GM12878 (cell line): ENCODE measurements at regions of chr1 and their contacts with region 1.

Region 1: GRCh38 chr1:2300851-2301606 is 72.9 kb downstream of the SKI start:
- DNase-seq: peak; percentile 76
- ATAC-seq: peak; percentile 89
- H3K4me3 ChIP-seq: peak overlapping the region; percentile 71
- H3K27ac ChIP-seq: peak overlapping the region; percentile 91
- H3K4me1 ChIP-seq: peaks cover 28% of the 10 kb centered on the region
- H3K27me3 ChIP-seq: no peaks in the 10 kb centered on the region
- CTCF ChIP-seq: no peak
- EP300 ChIP-seq: peak; percentile 81 to 84; a peak in 3 of 4 replicates
- POLR2A ChIP-seq: peak; percentile 47; the same call in 1 of the 2 replicates
- RAD21 ChIP-seq: no peak

Region 2: GRCh38 chr1:2205191-2205952 is 95.7 kb before region 1 on chr1:
- CTCF ChIA-PET with region 1: no interaction called
- POLR2A ChIA-PET with region 1: no interaction called
- RAD21 ChIA-PET with region 1: no interaction called
- SMC1A ChIA-PET with region 1: no interaction called
- in situ Hi-C with region 1: no loop called
- intact Hi-C with region 1: no loop called
- DNase-seq: peak; percentile 33
- ATAC-seq: peak; percentile 90
- H3K4me3 ChIP-seq: peak overlapping the region; percentile 64; the same call in 1 of the 2 replicates
- H3K27ac ChIP-seq: no peak overlapping the region
- H3K4me1 ChIP-seq: peaks cover 4% of the 10 kb centered on the region
- H3K27me3 ChIP-seq: no peaks in the 10 kb centered on the region; a peak in 1 of 4 replicates
- CTCF ChIP-seq: no peak
- EP300 ChIP-seq: no peak
- POLR2A ChIP-seq: peak; percentile 51
- RAD21 ChIP-seq: no peak

Region 3: DNA sequence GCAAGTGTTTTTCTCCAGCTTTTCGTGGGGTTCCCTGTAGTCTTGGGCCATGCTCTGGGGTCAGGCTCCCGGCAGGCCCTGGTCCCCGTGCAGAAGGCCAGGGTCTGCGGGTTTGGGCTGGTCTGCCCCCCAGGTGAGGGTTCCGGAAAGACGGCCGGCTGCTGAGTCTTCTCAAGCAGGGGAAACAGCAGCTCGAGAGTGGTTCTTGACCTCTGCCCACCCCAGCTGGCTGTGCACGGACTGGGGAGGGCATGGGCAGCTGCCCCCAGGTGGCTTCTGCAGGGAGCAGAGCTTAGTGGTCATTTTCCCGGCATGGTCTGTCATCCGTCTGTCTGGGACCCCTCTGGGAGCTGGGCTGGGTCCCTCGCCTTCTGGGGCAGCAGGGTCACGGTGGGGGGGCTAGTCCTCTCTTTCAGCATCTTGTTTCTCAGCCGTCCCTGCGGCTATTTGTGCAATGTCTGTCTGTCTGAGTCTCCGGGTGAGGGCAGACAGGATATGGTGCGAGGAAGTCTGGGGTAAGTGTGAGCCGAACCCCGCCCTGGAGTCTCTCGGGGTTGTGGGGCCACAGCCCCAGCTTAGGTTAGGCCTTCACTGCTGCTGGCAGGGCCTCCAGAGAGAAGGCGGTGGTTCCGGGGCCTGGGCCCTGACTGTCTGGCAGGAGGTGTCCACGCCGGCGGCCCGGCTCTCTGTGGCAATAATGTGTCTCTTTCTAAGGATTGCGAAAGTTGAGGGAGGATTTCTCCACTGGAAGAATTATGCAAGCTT is 66.8 kb before region 1 on chr1:
- CTCF ChIA-PET with region 1: interaction called, 3 read pairs
- POLR2A ChIA-PET with region 1: interaction called, 3 read pairs
- RAD21 ChIA-PET with region 1: interaction called, 13 read pairs
- SMC1A ChIA-PET with region 1: interaction called, 6 read pairs
- in situ Hi-C with region 1: no loop called
- intact Hi-C with region 1: loop called (anchors 10 kb)
- DNase-seq: no peak
- ATAC-seq: peak; percentile 79
- H3K4me3 ChIP-seq: peak overlapping the region; percentile 57; the same call in 1 of the 2 replicates
- H3K27ac ChIP-seq: peak overlapping the region; percentile 61
- H3K4me1 ChIP-seq: peaks cover 34% of the 10 kb centered on the region
- H3K27me3 ChIP-seq: no peaks in the 10 kb centered on the region
- CTCF ChIP-seq: no peak
- EP300 ChIP-seq: no peak
- POLR2A ChIP-seq: no peak
- RAD21 ChIP-seq: no peak

Region 4: GRCh38 chr1:2255420-2256369 is 45.3 kb before region 1 on chr1:
- CTCF ChIA-PET with region 1: no interaction called
- POLR2A ChIA-PET with region 1: no interaction called
- RAD21 ChIA-PET with region 1: no interaction called
- SMC1A ChIA-PET with region 1: interaction called, 4 read pairs
- in situ Hi-C with region 1: loop called (anchors 5 kb)
- intact Hi-C with region 1: no loop called
- DNase-seq: peak; percentile 78
- ATAC-seq: peak; percentile 84
- H3K4me3 ChIP-seq: no peak overlapping the region
- H3K27ac ChIP-seq: peak overlapping the region; percentile 68
- H3K4me1 ChIP-seq: peaks cover 17% of the 10 kb centered on the region
- H3K27me3 ChIP-seq: no peaks in the 10 kb centered on the region
- CTCF ChIP-seq: no peak
- EP300 ChIP-seq: no peak
- POLR2A ChIP-seq: no peak
- RAD21 ChIP-seq: no peak

Region 5: GRCh38 chr1:2845869-2846268 is 544.8 kb after region 1 on chr1:
- CTCF ChIA-PET with region 1: no interaction called
- POLR2A ChIA-PET with region 1: no interaction called
- RAD21 ChIA-PET with region 1: no interaction called
- SMC1A ChIA-PET with region 1: no interaction called
- in situ Hi-C with region 1: no loop called
- intact Hi-C with region 1: no loop called
- DNase-seq: no peak
- ATAC-seq: no peak
- H3K4me3 ChIP-seq: no peak overlapping the region
- H3K27ac ChIP-seq: no peak overlapping the region
- H3K4me1 ChIP-seq: no peaks in the 10 kb centered on the region
- H3K27me3 ChIP-seq: no peaks in the 10 kb centered on the region
- CTCF ChIP-seq: no peak
- EP300 ChIP-seq: no peak
- POLR2A ChIP-seq: no peak
- RAD21 ChIP-seq: no peak